Mammary epithelial cell (primary cell): ENCODE measurements at regions of chr22 and their contacts with region 1.

Region 1: DNA sequence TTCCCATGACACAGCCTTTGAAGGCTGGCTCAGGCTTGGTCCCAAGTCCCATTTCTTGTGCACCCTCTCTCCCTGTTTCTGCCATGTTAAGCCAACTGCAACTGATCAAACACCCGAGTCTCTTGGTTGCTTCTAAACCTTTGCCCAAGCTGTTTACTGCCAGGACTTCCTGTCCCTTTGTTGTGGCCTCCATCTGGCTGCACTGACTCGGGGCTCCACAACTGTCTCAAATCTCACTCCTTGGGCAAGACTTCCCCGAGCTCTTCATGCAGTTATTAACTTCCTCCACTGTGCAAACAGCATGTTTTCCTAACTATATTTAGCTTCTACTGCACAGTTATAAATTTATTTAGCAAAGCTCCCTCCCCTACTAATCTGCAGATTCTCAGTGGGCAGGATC is 4.3 kb downstream of the VPREB1 start:
- DNase-seq: no peak
- H3K4me3 ChIP-seq: no peak overlapping the region
- H3K27ac ChIP-seq: no peak overlapping the region
- H3K4me1 ChIP-seq: no peaks in the 10 kb centered on the region
- H3K27me3 ChIP-seq: no peaks in the 10 kb centered on the region
- CTCF ChIP-seq: no peak

Region 2: GRCh38 chr22:22201185-22201929 is 47.5 kb before region 1 on chr22:
- CTCF ChIA-PET with region 1: no interaction called
- dilution Hi-C with region 1: loop called (anchors 5 kb)
- in situ Hi-C with region 1: no loop called
- intact Hi-C with region 1: no loop called
- DNase-seq: no peak
- H3K4me3 ChIP-seq: no peak overlapping the region
- H3K27ac ChIP-seq: no peak overlapping the region
- H3K4me1 ChIP-seq: no peaks in the 10 kb centered on the region
- H3K27me3 ChIP-seq: no peaks in the 10 kb centered on the region
- CTCF ChIP-seq: peak; percentile 89 to 91

Region 3: GRCh38 chr22:22342697-22343580 is 94.1 kb after region 1 on chr22:
- CTCF ChIA-PET with region 1: interaction called, 7 read pairs
- dilution Hi-C with region 1: loop called (anchors 5 kb)
- in situ Hi-C with region 1: no loop called
- intact Hi-C with region 1: no loop called
- DNase-seq: peak; percentile 70
- H3K4me3 ChIP-seq: no peak overlapping the region
- H3K27ac ChIP-seq: no peak overlapping the region
- H3K4me1 ChIP-seq: no peaks in the 10 kb centered on the region
- H3K27me3 ChIP-seq: no peaks in the 10 kb centered on the region
- CTCF ChIP-seq: peak; percentile 95 to 96